ENCODE measurements at regions of chr15 and their contacts with region 1.

Region 1: GRCh38 chr15:70722266-70723121 is 40.9 kb downstream of the UACA start:
- DNase-seq: peak; percentile 65 to 78
- ATAC-seq: peak; percentile 21 to 65; a peak in 3 of 6 replicates
- H3K4me3 ChIP-seq: no peak overlapping the region
- H3K27ac ChIP-seq: peak overlapping the region in 1 of 2 experiments; percentile 45; a peak in 2 of 6 replicates
- H3K4me1 ChIP-seq: peaks cover 19% of the 10 kb centered on the region
- CTCF ChIP-seq: peak; percentile 90
- EP300 ChIP-seq: no peak
- POLR2A ChIP-seq: no peak
- RAD21 ChIP-seq: peak; percentile 69 to 80

Region 2: DNA sequence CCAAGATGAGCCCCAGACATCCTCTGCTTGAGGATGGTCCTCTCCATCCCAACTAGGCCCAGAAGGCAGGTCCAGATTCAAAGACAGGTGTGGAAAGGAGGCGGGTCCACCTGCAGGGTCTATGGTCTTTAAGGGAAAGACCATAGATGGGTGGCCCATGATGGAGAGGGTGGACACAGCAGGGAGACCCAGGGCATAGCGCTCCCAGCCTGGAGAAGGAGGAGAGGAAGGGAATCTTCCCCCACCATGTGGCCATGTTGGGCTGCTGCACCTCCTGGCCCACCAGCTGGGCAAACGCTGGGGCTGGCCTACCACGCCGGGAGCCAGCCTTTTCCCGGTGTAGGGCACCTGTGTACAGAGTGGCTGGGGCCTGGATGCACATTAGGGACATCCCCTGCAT is 359.6 kb before region 1 on chr15:
- CTCF ChIA-PET with region 1: no interaction called
- POLR2A ChIA-PET with region 1: no interaction called
- DNase-seq: peak in 1 of 2 experiments; percentile 35
- ATAC-seq: peak; percentile 64 to 93; a peak in 5 of 6 replicates
- H3K4me3 ChIP-seq: no peak overlapping the region
- H3K27ac ChIP-seq: no peak overlapping the region
- H3K4me1 ChIP-seq: no peaks in the 10 kb centered on the region
- CTCF ChIP-seq: peak; percentile 27; the same call in 2 of the 3 replicates
- EP300 ChIP-seq: no peak
- POLR2A ChIP-seq: no peak
- RAD21 ChIP-seq: peak; percentile 45 to 66

Region 3: DNA sequence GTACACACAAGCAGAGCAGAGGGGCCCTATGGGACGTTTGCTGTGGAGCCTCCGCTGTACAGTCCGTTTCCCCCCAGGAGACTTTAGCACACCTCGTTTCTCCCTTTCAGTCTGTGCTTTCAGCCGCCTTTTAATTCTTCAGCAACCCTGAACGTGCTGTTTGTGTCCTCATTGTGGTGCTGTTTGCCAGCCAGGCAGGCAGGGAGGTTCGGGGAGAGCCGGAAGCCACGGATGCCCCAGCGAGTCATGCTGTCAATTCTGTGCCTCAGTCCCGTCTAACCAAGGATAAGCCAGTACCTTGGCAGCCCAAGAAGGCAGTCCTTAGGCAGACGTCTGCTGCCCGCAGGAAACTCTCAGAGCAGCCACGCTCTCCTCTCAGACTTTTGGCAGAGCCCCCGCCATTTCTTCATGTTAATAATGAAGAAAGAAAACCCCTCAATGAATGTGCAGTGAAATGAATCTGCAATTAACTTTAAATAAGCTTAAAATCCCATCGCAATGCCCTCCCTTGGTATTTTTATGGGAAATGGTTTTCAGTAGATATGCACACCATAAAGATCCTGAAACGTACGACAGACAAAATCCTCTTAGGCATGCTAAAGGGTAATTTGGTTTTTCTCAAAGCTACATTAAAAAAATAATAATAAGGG is 117.7 kb before region 1 on chr15:
- CTCF ChIA-PET with region 1: no interaction called
- POLR2A ChIA-PET with region 1: no interaction called
- DNase-seq: no peak
- ATAC-seq: no peak
- H3K4me3 ChIP-seq: no peak overlapping the region
- H3K27ac ChIP-seq: no peak overlapping the region; a peak in 1 of 6 replicates
- H3K4me1 ChIP-seq: peaks cover 12% of the 10 kb centered on the region; the same call in 2 of the 3 replicates
- CTCF ChIP-seq: no peak
- EP300 ChIP-seq: no peak
- POLR2A ChIP-seq: no peak
- RAD21 ChIP-seq: peak in 1 of 2 experiments; percentile 9; a peak in 1 of 5 replicates

Region 4: DNA sequence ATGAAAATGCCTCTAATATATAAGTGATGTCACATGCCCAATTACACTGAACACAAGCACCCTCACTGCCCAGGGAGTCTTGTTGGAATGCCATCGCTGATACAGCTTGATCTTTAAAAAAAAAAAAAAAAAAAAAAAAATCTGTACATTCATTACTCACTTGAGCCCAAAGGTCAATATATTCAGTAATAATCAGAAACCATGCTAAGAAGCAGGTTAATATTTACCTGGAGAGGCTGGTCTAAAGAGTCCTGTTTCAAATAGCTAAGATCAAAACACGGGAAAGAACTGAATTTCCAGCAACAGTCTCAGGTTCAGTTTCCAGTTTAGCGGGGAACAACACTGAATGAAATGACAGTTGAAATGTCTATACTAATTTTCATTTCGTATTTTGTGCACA is 69.1 kb before region 1 on chr15:
- CTCF ChIA-PET with region 1: no interaction called
- POLR2A ChIA-PET with region 1: no interaction called
- DNase-seq: no peak
- ATAC-seq: no peak
- H3K4me3 ChIP-seq: no peak overlapping the region
- H3K27ac ChIP-seq: no peak overlapping the region
- H3K4me1 ChIP-seq: no peaks in the 10 kb centered on the region
- CTCF ChIP-seq: no peak
- EP300 ChIP-seq: no peak
- POLR2A ChIP-seq: no peak
- RAD21 ChIP-seq: no peak

Region 5: DNA sequence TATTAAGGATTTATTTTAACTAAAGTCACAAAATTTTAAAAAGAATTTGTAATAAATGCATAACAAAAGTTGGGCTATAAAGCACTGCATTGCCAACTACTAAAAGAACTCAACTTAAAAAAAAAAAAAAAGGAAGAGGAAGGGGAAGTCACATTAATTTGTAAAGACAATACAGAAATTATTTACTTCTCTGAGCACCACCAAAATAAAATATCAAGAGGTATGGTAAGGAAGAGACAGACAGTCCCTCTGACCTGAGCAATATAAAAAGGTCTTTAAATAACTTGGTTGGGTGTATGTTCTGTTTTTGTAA is 42.6 kb before region 1 on chr15:
- CTCF ChIA-PET with region 1: interaction called, 90 read pairs
- POLR2A ChIA-PET with region 1: interaction called, 4 read pairs
- DNase-seq: no peak
- ATAC-seq: no peak
- H3K4me3 ChIP-seq: no peak overlapping the region
- H3K27ac ChIP-seq: no peak overlapping the region
- H3K4me1 ChIP-seq: no peaks in the 10 kb centered on the region
- CTCF ChIP-seq: no peak
- EP300 ChIP-seq: no peak
- POLR2A ChIP-seq: no peak
- RAD21 ChIP-seq: no peak

Region 6: DNA sequence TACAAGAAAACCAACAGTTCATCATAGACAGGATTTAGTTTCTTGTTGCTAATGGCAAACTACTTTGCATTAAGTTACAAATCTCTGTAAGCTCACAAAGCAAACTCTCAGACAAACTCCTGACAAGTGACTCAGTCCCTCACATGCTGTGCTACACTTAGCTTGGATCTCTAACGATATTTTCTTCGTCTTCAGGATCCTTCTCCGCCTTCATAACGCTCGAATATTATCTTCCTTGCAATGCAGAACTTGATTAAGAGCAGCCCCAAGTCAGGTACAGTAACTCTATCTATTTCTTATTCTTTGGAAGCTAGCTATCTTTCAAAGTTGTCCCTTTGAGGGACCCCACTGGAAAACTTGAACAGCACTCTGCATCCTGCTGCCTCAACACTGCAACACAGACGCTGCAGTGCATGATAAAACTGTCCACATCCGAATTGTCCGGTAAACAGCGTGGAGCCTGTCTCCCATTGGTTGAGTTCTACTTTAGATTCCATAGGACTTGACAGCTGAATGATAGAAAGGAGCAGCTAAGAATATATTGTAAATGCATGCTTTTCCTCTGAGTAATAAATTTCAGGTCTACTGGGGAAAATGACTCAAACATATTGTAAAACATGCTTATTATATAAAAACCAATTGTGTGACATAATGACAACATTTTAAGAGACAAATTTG is 20.5 kb before region 1 on chr15:
- CTCF ChIA-PET with region 1: interaction called, 21 read pairs
- POLR2A ChIA-PET with region 1: interaction called, 4 read pairs
- DNase-seq: peak; percentile 37 to 50
- ATAC-seq: peak; percentile 73 to 91
- H3K4me3 ChIP-seq: no peak overlapping the region
- H3K27ac ChIP-seq: peak overlapping the region; percentile 22 to 61; a peak in 5 of 6 replicates
- H3K4me1 ChIP-seq: peaks cover 62% of the 10 kb centered on the region
- CTCF ChIP-seq: no peak
- EP300 ChIP-seq: no peak
- POLR2A ChIP-seq: no peak
- RAD21 ChIP-seq: no peak

Region 7: GRCh38 chr15:70748281-70748747 is 25.8 kb after region 1 on chr15:
- CTCF ChIA-PET with region 1: interaction called, 14 read pairs
- POLR2A ChIA-PET with region 1: no interaction called
- DNase-seq: no peak
- ATAC-seq: peak; percentile 34 to 56; a peak in 4 of 6 replicates
- H3K4me3 ChIP-seq: no peak overlapping the region
- H3K27ac ChIP-seq: peak overlapping the region in 1 of 2 experiments; percentile 30; a peak in 1 of 6 replicates
- H3K4me1 ChIP-seq: peaks cover 34% of the 10 kb centered on the region
- CTCF ChIP-seq: no peak
- EP300 ChIP-seq: no peak
- POLR2A ChIP-seq: no peak
- RAD21 ChIP-seq: no peak

Region 8: DNA sequence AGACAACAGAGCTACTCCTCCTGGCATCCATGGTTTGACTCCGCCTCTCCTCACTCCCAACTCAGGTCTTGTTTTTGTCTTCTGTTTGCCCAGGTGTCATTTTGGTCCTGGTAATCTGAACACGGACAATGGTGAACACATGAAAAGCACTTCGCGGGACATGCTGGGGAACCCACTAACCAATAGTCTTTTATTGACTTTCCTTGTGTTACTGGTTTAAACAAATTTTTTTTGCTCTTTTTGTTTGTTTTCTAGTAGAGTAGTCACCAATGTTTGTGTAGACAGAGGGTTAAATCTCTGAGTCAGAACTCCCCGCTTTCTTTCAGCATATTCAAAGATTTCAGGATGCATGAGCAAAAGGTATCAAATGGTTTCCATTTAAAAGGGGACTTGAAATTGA is 93.2 kb after region 1 on chr15:
- CTCF ChIA-PET with region 1: interaction called, 64 read pairs
- POLR2A ChIA-PET with region 1: no interaction called
- DNase-seq: peak in 1 of 2 experiments; percentile 53
- ATAC-seq: peak; percentile 52 to 53; a peak in 5 of 6 replicates
- H3K4me3 ChIP-seq: no peak overlapping the region
- H3K27ac ChIP-seq: 0 out of 6 replicates have a peak overlapping the region, but pooled peaks of 1 of the 2 experiments have one; percentile 14
- H3K4me1 ChIP-seq: peaks cover 23% of the 10 kb centered on the region
- CTCF ChIP-seq: no peak
- EP300 ChIP-seq: no peak
- POLR2A ChIP-seq: no peak
- RAD21 ChIP-seq: no peak